Ascending aorta (tissue), 2 donors: ENCODE measurements at regions of chr2 and their contacts with region 1.

Region 1: DNA sequence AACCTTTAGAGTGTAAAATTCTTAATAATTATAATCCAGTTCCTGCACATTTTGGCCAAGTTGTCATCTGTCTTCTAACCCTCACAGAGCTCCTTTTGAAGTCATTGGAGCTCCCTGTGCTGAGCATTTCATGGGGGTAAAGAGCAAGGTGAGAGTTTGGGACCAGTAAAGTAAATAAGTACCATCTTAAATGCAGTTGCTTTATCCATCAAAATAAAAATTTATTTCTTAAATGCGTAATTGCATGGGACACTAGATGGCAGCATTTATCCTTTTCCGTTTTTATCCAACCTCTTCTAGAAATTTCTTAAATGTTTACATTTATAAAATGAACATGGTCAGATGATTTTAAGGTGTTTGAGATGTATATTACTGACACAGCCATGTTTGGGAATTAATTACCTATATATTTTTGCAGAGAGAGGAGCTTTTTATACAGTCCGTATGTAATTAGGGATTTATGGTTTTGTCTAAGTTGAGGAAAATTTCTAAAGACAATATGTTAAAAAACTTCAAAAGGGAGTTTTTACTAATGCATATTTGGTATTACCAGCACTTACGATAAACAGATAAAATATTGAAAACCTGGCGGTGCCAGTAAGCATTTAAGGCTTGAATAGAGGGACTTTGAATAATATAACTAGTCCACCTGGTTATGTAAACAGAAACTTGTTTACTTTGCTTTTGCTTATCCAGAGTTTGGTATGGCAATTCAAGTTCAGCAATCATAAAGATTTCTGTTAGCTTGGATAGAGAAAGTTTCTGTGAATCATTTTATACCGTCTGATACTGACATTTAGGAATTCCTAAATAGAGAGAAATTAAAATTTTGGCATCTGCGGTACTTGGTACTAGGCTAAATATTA is 54.5 kb downstream of the ACSL3 start:
- DNase-seq: no peak
- H3K4me3 ChIP-seq: no peak overlapping the region
- H3K27ac ChIP-seq: no peak overlapping the region
- H3K4me1 ChIP-seq: peaks cover 0 to 19% of the 10 kb centered on the region in 2 donors
- H3K27me3 ChIP-seq: no peaks in the 10 kb centered on the region
- CTCF ChIP-seq: peak in 2 of 3 experiments; percentile 36 to 55

Region 2: DNA sequence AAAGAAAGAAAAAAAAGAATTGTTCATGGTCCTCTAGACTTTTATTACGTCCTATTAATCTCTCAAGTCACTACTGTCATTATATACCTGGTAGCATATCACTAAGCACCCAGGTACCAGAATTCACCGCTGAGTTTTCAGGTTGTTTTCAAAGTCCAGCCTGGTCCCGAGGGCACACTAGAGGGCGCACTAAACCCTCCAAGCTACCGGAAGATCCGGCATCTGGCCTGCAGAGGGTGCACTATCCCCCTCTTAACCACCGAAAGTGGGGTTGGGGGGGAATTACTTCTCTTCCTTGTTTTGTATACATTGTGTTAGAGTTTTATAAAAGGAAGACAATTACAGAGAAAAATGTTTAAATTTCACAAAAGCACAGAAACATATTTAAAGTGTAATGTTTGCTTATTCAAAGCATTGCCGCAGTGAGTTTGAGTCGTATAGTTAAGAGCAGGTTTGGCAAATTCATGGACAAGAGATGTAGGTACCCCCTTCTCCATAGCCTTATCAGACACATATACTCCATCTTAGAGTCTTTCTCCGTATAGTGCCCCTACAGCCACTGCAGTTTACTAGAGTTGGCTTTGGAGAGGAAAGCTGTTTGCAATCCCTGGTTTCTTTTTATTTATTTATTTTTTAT is 224.6 kb before region 1 on chr2:
- intact Hi-C with region 1: loop called (anchors 5 kb)
- DNase-seq: peak; percentile 16 to 85
- H3K4me3 ChIP-seq: no peak overlapping the region
- H3K27ac ChIP-seq: no peak overlapping the region
- H3K4me1 ChIP-seq: peaks cover 0 to 6% of the 10 kb centered on the region in 2 donors
- H3K27me3 ChIP-seq: no peaks in the 10 kb centered on the region
- CTCF ChIP-seq: peak; percentile 92 to 97 (median 97)